ENCODE measurements at regions of chr3 and their contacts with region 1.

Region 1: GRCh38 chr3:28348629-28349483 is at the starts of genes AZI2 and ZCWPW2:
- DNase-seq: peak; percentile 84 to 96 (median 91)
- ATAC-seq: peak; percentile 89
- H3K4me3 ChIP-seq: peak within 1 kb of the TSS; percentile 96 to 97
- H3K4me3 Mint-ChIP-seq: peak within 1 kb of the TSS; percentile 98
- H3K27ac ChIP-seq: peak within 1 kb of the TSS; percentile 95 to 99
- H3K27ac Mint-ChIP-seq: peak within 1 kb of the TSS; percentile 95
- H3K4me1 ChIP-seq: peaks cover 35% of the 10 kb centered on the region
- H3K4me1 Mint-ChIP-seq: peaks cover 60% of the 10 kb centered on the region
- H3K27me3 ChIP-seq: no peaks in the 10 kb centered on the region
- H3K27me3 Mint-ChIP-seq: no peaks in the 10 kb centered on the region
- CTCF ChIP-seq: no peak
- total RNA-seq, gene AZI2: 27.2 to 29.2 TPM
- total RNA-seq, gene ZCWPW2: 0.54 TPM in 1 of 2 experiments, not detected in the other

Region 2: DNA sequence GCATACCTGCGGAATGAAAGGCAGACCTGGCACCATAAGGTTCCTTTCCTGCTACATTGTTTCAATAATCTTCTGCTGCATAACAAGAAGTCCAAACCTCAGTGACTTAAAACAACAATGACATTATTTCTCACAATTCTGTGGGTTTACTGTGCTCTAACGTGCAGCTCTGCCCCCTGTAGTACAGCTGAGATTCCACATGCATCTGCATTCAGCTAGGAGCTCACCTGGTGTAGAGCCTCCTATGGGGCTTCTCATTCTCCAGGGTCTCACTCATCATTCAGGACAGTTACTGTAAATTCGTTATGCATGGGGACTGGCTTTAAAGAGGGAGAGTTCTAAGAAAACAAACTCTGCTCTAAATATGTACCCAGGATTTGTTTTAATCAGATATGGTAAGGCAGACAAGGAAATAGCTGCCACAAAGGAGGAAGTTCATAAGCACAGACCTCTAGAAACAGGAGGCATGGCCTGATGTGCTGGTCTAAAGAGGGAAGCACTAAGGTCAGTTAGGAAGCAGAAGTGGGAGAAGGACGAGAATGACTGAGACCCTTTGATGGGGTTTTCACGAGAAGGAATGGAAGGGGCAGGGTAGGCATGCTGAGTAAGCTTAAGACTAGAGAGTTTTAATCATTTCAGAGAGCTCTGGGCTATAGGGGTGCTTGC is 1326.6 kb before region 1 on chr3:
- CTCF ChIA-PET with region 1: no interaction called
- POLR2A ChIA-PET with region 1: no interaction called
- intact Hi-C with region 1: no loop called
- DNase-seq: no peak
- ATAC-seq: no peak
- H3K4me3 ChIP-seq: no peak overlapping the region
- H3K4me3 Mint-ChIP-seq: no peak overlapping the region
- H3K27ac ChIP-seq: no peak overlapping the region
- H3K27ac Mint-ChIP-seq: no peak overlapping the region
- H3K4me1 ChIP-seq: no peaks in the 10 kb centered on the region
- H3K4me1 Mint-ChIP-seq: no peaks in the 10 kb centered on the region
- H3K27me3 ChIP-seq: no peaks in the 10 kb centered on the region
- H3K27me3 Mint-ChIP-seq: no peaks in the 10 kb centered on the region
- CTCF ChIP-seq: no peak

Region 3: GRCh38 chr3:27368831-27369607 is 979.8 kb before region 1 on chr3 and contains the start of gene NEK10:
- CTCF ChIA-PET with region 1: no interaction called
- POLR2A ChIA-PET with region 1: interaction called, 4 read pairs
- intact Hi-C with region 1: loop called (anchors 1 to 2 kb)
- DNase-seq: peak; percentile 86 to 94 (median 93)
- ATAC-seq: peak; percentile 96
- H3K4me3 ChIP-seq: peak within 1 kb of the TSS; percentile 85 to 89
- H3K4me3 Mint-ChIP-seq: peak within 1 kb of the TSS; percentile 97
- H3K27ac ChIP-seq: peak within 1 kb of the TSS; percentile 15 to 22
- H3K27ac Mint-ChIP-seq: peak within 1 kb of the TSS; percentile 81
- H3K4me1 ChIP-seq: peaks cover 8% of the 10 kb centered on the region
- H3K4me1 Mint-ChIP-seq: peaks cover 16% of the 10 kb centered on the region
- H3K27me3 ChIP-seq: no peaks in the 10 kb centered on the region
- H3K27me3 Mint-ChIP-seq: no peaks in the 10 kb centered on the region
- CTCF ChIP-seq: no peak
- total RNA-seq, gene NEK10: 0.22 to 0.94 TPM

Region 4: DNA sequence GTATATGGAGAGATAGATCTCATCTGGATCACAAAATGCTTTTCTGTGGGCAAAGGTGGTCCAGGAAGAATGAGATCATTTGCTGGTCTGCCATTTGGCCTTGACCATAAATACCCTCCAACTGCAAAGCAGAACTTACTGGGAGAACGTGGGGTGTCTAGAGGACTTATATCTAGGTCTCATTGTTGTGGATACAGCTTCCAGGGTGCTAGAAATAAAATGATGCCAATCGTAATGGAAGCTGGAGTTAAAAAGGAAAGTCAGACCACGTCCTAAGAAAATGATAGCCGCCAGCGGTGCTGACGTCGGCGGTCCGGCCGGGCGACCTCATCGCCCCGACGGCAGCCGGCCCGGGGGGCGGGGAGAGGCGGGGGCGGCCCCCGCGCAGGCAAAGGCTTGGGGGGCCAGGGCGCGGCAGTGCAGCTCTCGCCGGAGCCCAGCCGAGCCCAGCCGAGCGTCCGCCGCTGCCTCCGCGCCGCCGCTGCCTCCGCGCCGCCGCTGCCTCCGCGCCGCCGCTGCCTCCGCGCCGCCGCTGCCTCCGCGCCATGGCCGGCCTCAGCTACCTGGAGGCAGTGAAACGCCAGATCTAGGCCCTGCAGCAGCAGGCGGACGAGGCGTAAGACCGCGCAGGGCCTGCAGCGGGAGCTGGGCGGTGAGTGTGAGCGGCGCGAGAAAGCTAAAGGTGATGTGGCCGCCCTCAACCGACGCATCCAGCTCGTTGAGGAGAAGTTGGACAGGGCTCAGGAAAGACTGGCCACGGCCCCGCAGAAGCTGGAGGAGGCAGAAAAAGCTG is 716.2 kb before region 1 on chr3:
- CTCF ChIA-PET with region 1: no interaction called
- POLR2A ChIA-PET with region 1: interaction called, 6 read pairs
- intact Hi-C with region 1: loop called in 1 of 2 experiments (anchors 5 kb)
- DNase-seq: peak; percentile 12 to 75 (median 47)
- ATAC-seq: peak; percentile 81
- H3K4me3 ChIP-seq: peak overlapping the region; percentile 65 to 71
- H3K4me3 Mint-ChIP-seq: peak overlapping the region; percentile 95
- H3K27ac ChIP-seq: peak overlapping the region; percentile 54 to 73
- H3K27ac Mint-ChIP-seq: peak overlapping the region; percentile 92
- H3K4me1 ChIP-seq: peaks cover 20% of the 10 kb centered on the region
- H3K4me1 Mint-ChIP-seq: peaks cover 27% of the 10 kb centered on the region
- H3K27me3 ChIP-seq: no peaks in the 10 kb centered on the region
- H3K27me3 Mint-ChIP-seq: no peaks in the 10 kb centered on the region
- CTCF ChIP-seq: no peak

Region 5: DNA sequence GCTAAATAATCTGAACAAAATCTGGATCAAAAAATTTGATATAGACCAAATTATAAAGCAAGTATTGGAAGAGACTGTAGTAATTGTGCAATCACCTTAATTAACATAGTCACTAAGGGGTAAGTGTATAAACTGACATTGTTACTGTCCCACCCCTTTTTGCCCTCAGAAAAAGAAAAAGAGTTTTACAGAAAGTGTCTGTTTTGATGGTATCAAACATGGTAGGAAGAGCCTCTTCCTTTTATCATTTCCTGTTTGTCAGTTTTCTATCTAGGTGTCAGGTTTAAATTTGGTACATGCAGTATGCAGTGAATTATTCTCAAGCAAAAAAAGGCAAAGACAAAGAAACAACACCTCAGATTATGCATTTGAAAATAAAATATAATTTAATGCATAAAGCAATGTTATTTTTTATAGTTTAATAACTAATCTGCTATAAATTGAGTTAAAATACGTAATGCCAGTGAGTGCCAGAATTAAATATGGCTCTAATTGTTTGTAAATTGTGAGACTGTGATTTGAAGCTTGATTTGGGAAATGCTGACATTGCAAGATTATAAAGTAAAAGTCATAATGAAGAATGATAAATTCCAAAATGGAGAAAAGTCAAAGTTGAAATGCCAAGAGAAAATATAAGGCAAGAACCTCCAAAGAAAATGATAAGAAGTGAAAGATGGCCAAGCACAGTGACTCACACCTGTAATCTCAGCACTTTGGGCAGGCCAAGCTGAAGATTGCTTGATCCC is 137.7 kb before region 1 on chr3:
- CTCF ChIA-PET with region 1: no interaction called
- POLR2A ChIA-PET with region 1: no interaction called
- intact Hi-C with region 1: loop called in 1 of 2 experiments (anchors 1 kb)
- DNase-seq: peak in 2 of 9 experiments; percentile 36 to 56
- ATAC-seq: peak; percentile 75
- H3K4me3 ChIP-seq: no peak overlapping the region
- H3K4me3 Mint-ChIP-seq: peak overlapping the region; percentile 1
- H3K27ac ChIP-seq: peak overlapping the region in 1 of 2 experiments; percentile 51
- H3K27ac Mint-ChIP-seq: peak overlapping the region; percentile 83
- H3K4me1 ChIP-seq: peaks cover 20% of the 10 kb centered on the region
- H3K4me1 Mint-ChIP-seq: peaks cover 42% of the 10 kb centered on the region
- H3K27me3 ChIP-seq: no peaks in the 10 kb centered on the region
- H3K27me3 Mint-ChIP-seq: no peaks in the 10 kb centered on the region
- CTCF ChIP-seq: no peak

Region 6: DNA sequence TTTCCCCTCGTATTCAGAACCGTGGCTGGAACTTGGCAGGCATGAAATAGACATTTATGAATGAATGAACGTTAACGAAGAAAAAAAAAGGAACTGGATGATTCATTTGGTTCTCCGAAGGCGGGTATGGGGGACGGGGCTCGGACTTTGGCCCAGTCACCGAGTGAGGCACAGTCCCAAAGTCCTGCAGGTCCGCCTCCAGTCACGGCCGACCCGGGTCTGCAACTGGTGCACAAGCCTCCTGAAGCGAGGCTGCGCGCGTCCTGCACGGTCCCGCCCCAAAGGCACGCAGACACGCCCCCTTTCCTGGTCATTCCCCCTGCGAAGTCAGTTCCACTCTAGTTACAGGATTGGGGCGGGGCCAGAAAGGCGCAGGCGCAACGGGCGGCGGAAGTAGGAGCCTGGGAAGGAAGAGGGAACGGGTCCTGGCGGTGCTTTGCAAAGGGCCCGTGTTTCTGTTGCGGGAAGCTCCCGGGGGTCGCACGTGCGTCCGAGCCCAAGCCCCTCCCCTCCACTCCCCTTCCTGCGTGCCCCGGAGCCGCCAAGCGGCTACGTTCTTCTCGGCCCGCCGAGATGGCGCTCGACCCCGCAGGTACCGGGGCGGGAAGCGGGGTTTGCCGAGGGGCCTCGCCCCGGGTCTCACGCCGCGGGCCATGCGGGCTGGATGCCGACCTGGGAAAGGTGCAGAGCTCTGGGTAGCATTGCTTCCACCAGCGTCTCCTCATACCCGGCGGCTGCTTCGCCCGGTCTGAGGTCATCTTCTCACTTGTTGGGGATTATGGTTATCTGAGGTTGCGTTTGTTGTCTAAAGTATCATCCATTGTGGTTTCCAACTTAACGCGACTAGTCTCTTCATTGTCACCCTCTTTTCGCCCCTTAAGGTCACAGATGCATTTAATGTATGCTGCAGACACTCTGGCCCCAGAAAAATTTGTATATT is 107.4 kb before region 1 on chr3 and contains the start of gene CMC1:
- CTCF ChIA-PET with region 1: no interaction called
- POLR2A ChIA-PET with region 1: no interaction called
- intact Hi-C with region 1: loop called (anchors 2 to 5 kb)
- DNase-seq: peak; percentile 68 to 94 (median 90)
- ATAC-seq: peak; percentile 90
- H3K4me3 ChIP-seq: peak within 1 kb of the TSS; percentile 76 to 89
- H3K4me3 Mint-ChIP-seq: peak within 1 kb of the TSS; percentile 95
- H3K27ac ChIP-seq: peak within 1 kb of the TSS; percentile 53 to 77
- H3K27ac Mint-ChIP-seq: peak within 1 kb of the TSS; percentile 92
- H3K4me1 ChIP-seq: peaks cover 29% of the 10 kb centered on the region
- H3K4me1 Mint-ChIP-seq: peaks cover 50% of the 10 kb centered on the region
- H3K27me3 ChIP-seq: no peaks in the 10 kb centered on the region
- H3K27me3 Mint-ChIP-seq: no peaks in the 10 kb centered on the region
- CTCF ChIP-seq: no peak
- total RNA-seq, gene CMC1: 28.0 to 31.0 TPM

Region 7: DNA sequence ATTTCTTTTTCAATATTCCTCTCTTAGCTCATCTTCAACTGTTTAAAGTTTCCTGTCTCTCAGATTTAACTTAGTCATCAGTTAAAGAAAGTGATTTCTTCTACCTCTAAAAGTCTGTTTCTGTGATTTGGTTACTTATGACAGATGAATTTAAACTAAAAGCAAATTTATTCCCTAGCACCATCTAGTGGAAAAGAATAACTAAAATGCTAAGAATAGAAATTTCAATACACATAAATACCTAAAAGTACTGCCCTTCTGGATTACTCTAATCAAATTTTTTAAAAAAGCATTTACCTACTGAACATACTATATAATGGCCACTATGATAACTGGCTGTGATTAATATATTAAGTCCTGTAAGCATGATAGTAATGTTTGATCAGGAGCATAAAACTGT is 14.3 kb before region 1 on chr3:
- CTCF ChIA-PET with region 1: interaction called, 12 read pairs
- POLR2A ChIA-PET with region 1: interaction called, 21 read pairs
- intact Hi-C with region 1: no loop called
- DNase-seq: peak in 1 of 9 experiments; percentile 27
- ATAC-seq: no peak
- H3K4me3 ChIP-seq: no peak overlapping the region
- H3K4me3 Mint-ChIP-seq: no peak overlapping the region
- H3K27ac ChIP-seq: no peak overlapping the region
- H3K27ac Mint-ChIP-seq: no peak overlapping the region
- H3K4me1 ChIP-seq: peaks cover 7% of the 10 kb centered on the region
- H3K4me1 Mint-ChIP-seq: peaks cover 12% of the 10 kb centered on the region
- H3K27me3 ChIP-seq: no peaks in the 10 kb centered on the region
- H3K27me3 Mint-ChIP-seq: no peaks in the 10 kb centered on the region
- CTCF ChIP-seq: peak; percentile 42

Measured in CD8-positive, alpha-beta T cell (primary cell).